Dorsolateral prefrontal cortex (tissue), 120 donors: ENCODE measurements at regions of chr5 and their contacts with region 1.

Region 1: DNA sequence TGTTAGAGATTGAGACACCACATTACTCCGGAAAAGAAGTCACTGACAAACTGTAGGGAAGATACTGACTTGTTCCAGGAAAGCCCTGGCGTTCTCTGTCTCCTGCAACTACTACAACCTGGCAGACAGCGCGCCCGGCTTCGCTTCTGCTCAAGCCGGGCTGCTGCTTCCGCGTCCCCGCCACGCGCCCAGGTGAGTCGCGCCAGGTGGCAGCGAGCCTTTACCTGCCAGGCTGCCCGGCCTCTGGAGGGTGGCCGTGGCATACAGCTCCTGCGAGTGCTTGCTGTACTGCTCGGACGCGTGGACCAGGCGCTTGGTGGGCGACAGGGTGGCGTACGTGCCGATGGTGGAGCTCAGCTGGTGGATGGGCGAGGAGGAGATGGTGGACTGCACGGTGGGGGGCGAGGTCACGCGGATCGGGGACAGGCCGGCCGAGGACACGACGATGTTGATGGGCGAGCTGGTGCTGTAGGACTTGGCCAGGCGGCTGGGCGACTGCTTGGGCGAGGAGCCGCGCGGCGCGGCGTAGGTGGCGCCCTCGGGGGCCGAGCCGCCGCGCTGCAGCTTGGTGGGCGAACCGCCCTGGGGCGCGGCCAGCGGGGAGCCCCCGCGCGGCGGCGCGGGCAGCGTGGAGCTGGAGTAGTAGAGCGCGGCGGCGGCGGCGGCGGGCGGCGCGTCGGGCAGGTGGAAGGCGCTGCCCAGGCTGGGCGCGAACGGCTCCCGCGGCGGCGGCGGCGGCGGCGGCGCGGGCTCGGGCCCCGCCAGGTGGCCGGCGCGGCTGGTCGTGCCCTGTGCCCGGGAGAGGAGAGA is 519.6 kb downstream of the CTNND2 start:
- DNase-seq: peak; percentile 44 to 79 (median 56)
- H3K4me3 ChIP-seq: peak overlapping the region; percentile 36 to 81 (median 65)
- H3K27ac ChIP-seq: peak overlapping the region; percentile 49 to 96 (median 91)
- H3K27me3 ChIP-seq: no peaks in the 10 kb centered on the region
- CTCF ChIP-seq: peak in 30 of 56 donors; percentile 6 to 59 (median 24)

Region 2: DNA sequence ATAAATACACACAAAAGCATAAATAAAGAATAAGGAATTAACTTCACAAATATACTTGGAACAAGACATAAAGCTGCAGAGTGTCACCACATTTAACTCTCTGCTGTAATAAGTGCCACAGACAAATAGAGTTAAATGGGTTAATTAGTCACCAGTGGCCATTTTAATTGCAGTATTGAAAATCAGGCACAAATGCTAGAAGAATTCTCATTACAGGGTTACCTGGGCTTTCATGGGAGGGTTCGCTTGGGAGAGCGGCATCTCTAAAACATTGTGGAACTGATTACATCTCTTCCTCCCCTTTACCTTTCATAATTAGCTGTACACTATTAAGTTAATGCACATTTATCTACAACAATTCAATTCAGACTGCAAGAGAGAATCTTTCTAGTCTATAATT is 118.3 kb before region 1 on chr5:
- intact Hi-C with region 1: loop called (anchors 2 to 5 kb)
- DNase-seq: no peak
- H3K4me3 ChIP-seq: no peak overlapping the region
- H3K27ac ChIP-seq: peak overlapping the region in 7 of 59 donors; percentile 0 to 35 (median 13)
- H3K27me3 ChIP-seq: no peaks in the 10 kb centered on the region
- CTCF ChIP-seq: no peak

Region 3: GRCh38 chr5:11494340-11494739 is 109.7 kb after region 1 on chr5:
- intact Hi-C with region 1: loop called in 1 of 2 experiments (anchors 5 kb)
- DNase-seq: no peak
- H3K4me3 ChIP-seq: no peak overlapping the region
- H3K27ac ChIP-seq: peak overlapping the region in 5 of 59 donors; percentile 7 to 55 (median 20)
- H3K27me3 ChIP-seq: no peaks in the 10 kb centered on the region
- CTCF ChIP-seq: peak; percentile 46 to 85 (median 65)

Region 4: DNA sequence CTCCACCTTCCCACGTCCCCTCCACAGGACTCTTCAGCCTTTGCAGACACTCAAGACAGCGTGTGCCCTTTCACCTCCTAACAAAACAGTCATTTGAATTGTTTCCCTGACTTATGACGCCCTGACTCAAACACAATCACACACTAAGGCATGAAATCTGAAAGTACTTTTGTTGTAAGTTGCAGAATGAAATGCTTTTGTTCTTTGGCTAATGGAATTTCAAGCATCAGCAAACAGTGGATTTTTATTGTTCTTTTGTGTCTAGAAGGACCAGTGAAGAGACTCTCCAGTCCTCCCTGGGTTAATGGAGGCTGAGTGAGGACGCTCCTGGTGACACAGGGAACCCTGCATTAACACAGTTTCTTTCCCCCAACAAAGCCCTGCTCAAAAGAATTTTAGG is 139.5 kb after region 1 on chr5:
- intact Hi-C with region 1: loop called in 1 of 2 experiments (anchors 10 kb)
- DNase-seq: no peak
- H3K4me3 ChIP-seq: peak overlapping the region in 7 of 59 donors; percentile 3 to 36 (median 14)
- H3K27ac ChIP-seq: peak overlapping the region; percentile 75 to 99 (median 95)
- H3K27me3 ChIP-seq: no peaks in the 10 kb centered on the region
- CTCF ChIP-seq: peak in 2 of 56 donors; percentile 13 to 14

Region 5: GRCh38 chr5:11596185-11596584 is 211.5 kb after region 1 on chr5:
- intact Hi-C with region 1: loop called (anchors 5 kb)
- DNase-seq: no peak
- H3K4me3 ChIP-seq: peak overlapping the region in 26 of 59 donors; percentile 3 to 51 (median 26)
- H3K27ac ChIP-seq: peak overlapping the region; percentile 67 to 97 (median 88)
- H3K27me3 ChIP-seq: no peaks in the 10 kb centered on the region
- CTCF ChIP-seq: peak in 1 of 56 donors; percentile 2

Region 6: DNA sequence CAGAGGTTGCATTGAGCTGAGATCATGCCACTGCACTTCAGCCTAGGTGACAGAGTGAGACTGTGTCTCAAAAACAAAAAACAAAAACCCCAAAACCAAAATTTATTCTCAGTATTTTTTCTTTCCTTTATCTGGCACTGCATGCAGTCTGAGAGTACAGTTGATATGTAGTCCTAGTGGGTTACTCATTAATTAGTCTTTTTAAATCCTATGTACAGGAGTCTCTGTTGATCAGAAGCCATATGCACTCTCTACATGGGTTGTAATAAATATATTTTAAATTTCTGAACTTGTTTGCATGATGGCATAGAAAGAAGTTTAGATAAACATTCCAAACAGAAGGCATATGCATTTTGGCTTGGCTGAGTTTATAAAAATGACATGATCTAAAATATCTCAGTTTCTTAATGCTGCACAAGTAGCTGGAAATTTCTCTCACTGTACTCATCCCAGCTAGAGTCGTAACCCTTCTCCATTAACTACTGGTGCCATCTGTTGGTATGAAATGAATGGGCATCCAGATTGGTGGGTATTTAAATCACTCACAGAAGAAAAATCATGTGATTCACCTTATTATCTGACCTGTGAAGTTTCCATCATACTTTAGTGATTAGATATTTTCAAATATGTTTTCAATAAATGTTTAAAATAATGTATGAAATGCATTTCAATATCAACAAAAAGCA is 234.8 kb after region 1 on chr5:
- intact Hi-C with region 1: loop called in 1 of 2 experiments (anchors 10 kb)
- DNase-seq: no peak
- H3K4me3 ChIP-seq: no peak overlapping the region
- H3K27ac ChIP-seq: peak overlapping the region in 11 of 59 donors; percentile 1 to 54 (median 27)
- H3K27me3 ChIP-seq: no peaks in the 10 kb centered on the region
- CTCF ChIP-seq: peak; percentile 32 to 89 (median 66)

Region 7: DNA sequence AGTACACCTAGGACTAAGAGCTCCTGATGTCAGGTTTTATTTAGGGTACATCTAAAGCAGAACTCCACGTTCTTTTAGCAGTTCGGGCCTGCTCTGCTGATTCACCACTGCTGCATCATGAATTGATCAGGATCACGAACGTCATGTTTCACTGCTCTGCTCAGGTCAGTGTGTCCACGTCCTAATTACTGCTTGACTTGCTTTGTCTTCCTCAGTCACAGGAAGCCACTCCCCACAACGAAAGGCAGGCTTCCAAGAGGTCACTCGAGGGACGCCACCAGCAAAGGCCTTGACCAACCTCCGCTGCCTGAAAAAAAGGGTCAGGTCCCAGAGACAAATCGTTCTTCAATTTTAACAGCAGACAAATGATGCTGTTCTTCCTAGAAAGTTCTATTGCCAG is 479.3 kb after region 1 on chr5:
- intact Hi-C with region 1: no loop called
- DNase-seq: no peak
- H3K4me3 ChIP-seq: no peak overlapping the region
- H3K27ac ChIP-seq: peak overlapping the region in 1 of 59 donors; percentile 11
- H3K27me3 ChIP-seq: no peaks in the 10 kb centered on the region
- CTCF ChIP-seq: no peak